ENCODE measurements at regions of chr11 and their contacts with region 1.

Region 1: DNA sequence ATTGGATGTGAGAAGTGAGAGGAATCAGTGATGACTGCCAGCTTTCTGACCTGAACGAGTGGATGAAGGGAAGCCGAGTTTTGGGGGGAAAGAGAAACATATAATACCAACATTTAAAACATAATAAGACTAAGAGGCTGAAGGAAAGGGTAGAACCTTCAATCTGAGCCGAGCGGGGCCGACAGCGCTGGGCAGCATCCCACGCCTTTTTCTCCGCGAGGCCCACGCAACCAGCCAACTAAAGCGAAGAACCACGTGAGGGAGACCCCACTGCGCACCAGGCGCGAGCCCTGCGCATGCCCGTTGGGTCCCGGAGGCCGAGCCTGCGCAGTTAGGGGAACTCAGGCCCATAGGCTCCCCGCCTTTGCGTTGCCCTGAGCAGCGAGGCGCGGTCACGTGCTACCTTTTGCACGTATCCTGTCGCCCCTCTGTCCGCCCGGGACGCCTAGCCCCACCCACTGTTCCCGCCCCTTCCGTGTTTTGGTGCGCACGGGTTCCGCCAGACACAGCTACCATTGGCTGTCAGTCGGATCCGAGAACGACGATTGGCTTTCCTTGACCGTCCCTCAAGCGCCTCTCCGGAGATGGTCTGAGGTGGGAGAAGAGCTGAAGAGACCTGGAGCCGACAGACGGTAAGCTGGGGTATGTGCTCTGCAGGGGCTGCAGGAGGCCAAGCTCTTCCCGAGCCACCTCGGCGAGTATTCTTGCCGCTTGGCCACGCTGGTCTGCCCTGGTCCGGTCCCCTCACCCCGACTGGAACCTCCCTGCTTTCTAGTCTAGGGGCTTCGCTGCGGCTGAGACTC is at the start of gene HINFP:
- DNase-seq: peak; percentile 100
- ATAC-seq: peak; percentile 96
- H3K4me3 ChIP-seq: peak within 1 kb of the TSS; percentile 91
- H3K27ac ChIP-seq: peak within 1 kb of the TSS; percentile 35
- H3K4me1 ChIP-seq: peaks cover 15% of the 10 kb centered on the region
- H3K27me3 ChIP-seq: no peaks in the 10 kb centered on the region
- CTCF ChIP-seq: no peak
- total RNA-seq, gene HINFP: 14.7 and 24.7 TPM in 2 replicates

Region 2: GRCh38 chr11:119108146-119108856 is 12.9 kb before region 1 on chr11:
- CTCF ChIA-PET with region 1: no interaction called
- POLR2A ChIA-PET with region 1: interaction called, 14 read pairs
- intact Hi-C with region 1: loop called (anchors 1 kb)
- DNase-seq: peak; percentile 92
- ATAC-seq: peak; percentile 53
- H3K4me3 ChIP-seq: peak overlapping the region; percentile 97
- H3K27ac ChIP-seq: peak overlapping the region; percentile 36
- H3K4me1 ChIP-seq: peaks cover 26% of the 10 kb centered on the region
- H3K27me3 ChIP-seq: no peaks in the 10 kb centered on the region
- CTCF ChIP-seq: no peak

Measured in PC-3 (cell line).